ENCODE measurements at regions of chr13 and their contacts with region 1.

Region 1: DNA sequence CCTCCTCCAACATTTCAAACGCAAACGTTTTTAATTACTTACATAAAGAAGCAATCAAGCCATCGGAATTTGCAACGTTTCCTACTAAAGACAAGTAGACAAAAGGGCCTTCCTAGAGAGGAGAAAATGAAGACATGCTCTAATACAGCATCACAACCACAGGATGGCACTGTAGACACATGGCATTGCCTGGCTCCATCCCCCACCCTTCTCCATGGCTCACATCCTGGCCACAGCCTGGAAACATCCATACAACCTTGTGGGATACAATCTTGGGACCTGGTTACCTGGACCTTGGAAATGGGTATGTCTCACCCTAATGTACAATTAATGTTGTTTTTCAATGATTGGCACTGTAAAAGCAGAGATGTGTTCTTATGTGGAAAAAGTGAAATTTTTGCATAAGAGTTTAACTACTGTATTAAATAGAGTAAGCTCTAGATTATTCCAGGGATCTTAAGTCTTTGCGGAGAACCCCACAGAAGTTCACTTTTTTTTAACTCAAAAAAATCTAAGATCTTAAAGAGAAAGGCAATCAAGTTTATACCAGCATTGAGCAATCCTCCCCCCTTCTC is 21.5 kb downstream of the EBPL start:
- DNase-seq: peak; percentile 33 to 65
- ATAC-seq: peak; percentile 93 to 96 (median 96)
- H3K4me3 ChIP-seq: no peak overlapping the region
- H3K27ac ChIP-seq: no peak overlapping the region
- H3K4me1 ChIP-seq: peaks cover 17% of the 10 kb centered on the region
- H3K27me3 ChIP-seq: no peaks in the 10 kb centered on the region
- CTCF ChIP-seq: peak; percentile 74

Region 2: GRCh38 chr13:49495783-49496762 is 173.7 kb before region 1 on chr13 and contains the start of gene PHF11:
- intact Hi-C with region 1: no loop called
- DNase-seq: peak; percentile 82 to 91
- ATAC-seq: peak; percentile 92 to 93 (median 92)
- H3K4me3 ChIP-seq: peak within 1 kb of the TSS; percentile 87
- H3K27ac ChIP-seq: peak within 1 kb of the TSS; percentile 94
- H3K4me1 ChIP-seq: peaks cover 4% of the 10 kb centered on the region
- H3K27me3 ChIP-seq: no peaks in the 10 kb centered on the region
- CTCF ChIP-seq: peak; percentile 15
- total RNA-seq, gene PHF11: 8.2 to 14.7 (median 10.1) TPM

Region 3: GRCh38 chr13:49784886-49785570 is 115.2 kb after region 1 on chr13:
- intact Hi-C with region 1: loop called in 1 of 2 experiments (anchors 5 kb)
- DNase-seq: no peak
- ATAC-seq: peak; percentile 74 to 89 (median 86)
- H3K4me3 ChIP-seq: peak overlapping the region; percentile 17
- H3K27ac ChIP-seq: peak overlapping the region; percentile 76
- H3K4me1 ChIP-seq: peaks cover 91% of the 10 kb centered on the region
- H3K27me3 ChIP-seq: no peaks in the 10 kb centered on the region
- CTCF ChIP-seq: no peak

Region 4: DNA sequence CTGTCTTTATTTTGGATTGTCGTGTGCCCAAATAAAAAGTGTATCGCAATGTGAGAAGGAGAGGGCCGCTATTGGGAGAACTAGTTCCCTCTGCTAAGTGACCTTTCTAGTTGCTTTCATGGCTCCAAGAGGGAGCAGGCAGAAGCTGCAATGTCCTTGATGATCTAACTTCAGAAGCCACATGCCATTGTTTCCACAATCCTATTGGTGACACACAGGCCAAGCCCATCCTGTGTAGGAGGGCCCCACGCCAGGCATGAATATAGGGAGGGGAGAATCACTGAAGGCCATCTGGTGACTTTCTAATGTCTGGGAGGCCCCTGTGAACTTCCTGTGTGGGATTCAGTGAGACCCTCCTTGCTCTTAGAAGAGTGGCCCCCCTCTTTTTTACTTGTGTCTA is 170.4 kb after region 1 on chr13:
- intact Hi-C with region 1: loop called in 1 of 2 experiments (anchors 5 kb)
- DNase-seq: no peak
- ATAC-seq: no peak
- H3K4me3 ChIP-seq: no peak overlapping the region
- H3K27ac ChIP-seq: no peak overlapping the region
- H3K4me1 ChIP-seq: no peaks in the 10 kb centered on the region
- H3K27me3 ChIP-seq: no peaks in the 10 kb centered on the region
- CTCF ChIP-seq: no peak